ENCODE measurements at regions of chr3 and their contacts with region 1.

Region 1: GRCh38 chr3:39189959-39190269 is 2.5 kb downstream of the XIRP1 start:
- DNase-seq: peak; percentile 75
- H3K4me3 Mint-ChIP-seq: no peak overlapping the region
- H3K27ac Mint-ChIP-seq: no peak overlapping the region
- H3K4me1 Mint-ChIP-seq: peaks cover 27% of the 10 kb centered on the region
- H3K27me3 Mint-ChIP-seq: no peaks in the 10 kb centered on the region

Region 2: GRCh38 chr3:39126532-39127071 is 63.3 kb before region 1 on chr3:
- CTCF ChIA-PET with region 1: interaction called, 52 read pairs
- intact Hi-C with region 1: no loop called
- DNase-seq: peak; percentile 80
- H3K4me3 Mint-ChIP-seq: no peak overlapping the region
- H3K27ac Mint-ChIP-seq: no peak overlapping the region
- H3K4me1 Mint-ChIP-seq: peaks cover 18% of the 10 kb centered on the region
- H3K27me3 Mint-ChIP-seq: no peaks in the 10 kb centered on the region

Region 3: DNA sequence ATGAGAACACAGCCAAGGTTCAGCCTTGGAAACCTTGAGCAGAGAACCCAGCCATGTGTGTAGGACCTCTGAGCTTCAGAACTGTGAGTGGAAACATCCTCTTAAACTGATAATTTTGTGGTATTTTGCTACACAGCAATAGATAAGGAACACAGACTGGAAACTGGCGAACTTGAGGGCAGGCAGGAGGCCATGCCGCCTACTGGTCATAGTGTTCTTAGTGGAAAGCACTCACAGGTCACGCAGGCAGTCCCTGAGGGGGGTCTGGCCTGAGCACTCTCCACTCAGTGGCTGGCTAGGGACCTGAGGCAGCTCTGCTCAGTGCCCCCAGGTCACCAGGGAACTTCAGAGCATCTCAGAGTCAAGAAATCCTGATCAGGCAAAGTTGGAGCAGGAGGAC is 12.2 kb after region 1 on chr3:
- CTCF ChIA-PET with region 1: interaction called, 22 read pairs
- intact Hi-C with region 1: no loop called
- DNase-seq: no peak
- H3K4me3 Mint-ChIP-seq: no peak overlapping the region
- H3K27ac Mint-ChIP-seq: no peak overlapping the region
- H3K4me1 Mint-ChIP-seq: peaks cover 2% of the 10 kb centered on the region
- H3K27me3 Mint-ChIP-seq: no peaks in the 10 kb centered on the region

Region 4: DNA sequence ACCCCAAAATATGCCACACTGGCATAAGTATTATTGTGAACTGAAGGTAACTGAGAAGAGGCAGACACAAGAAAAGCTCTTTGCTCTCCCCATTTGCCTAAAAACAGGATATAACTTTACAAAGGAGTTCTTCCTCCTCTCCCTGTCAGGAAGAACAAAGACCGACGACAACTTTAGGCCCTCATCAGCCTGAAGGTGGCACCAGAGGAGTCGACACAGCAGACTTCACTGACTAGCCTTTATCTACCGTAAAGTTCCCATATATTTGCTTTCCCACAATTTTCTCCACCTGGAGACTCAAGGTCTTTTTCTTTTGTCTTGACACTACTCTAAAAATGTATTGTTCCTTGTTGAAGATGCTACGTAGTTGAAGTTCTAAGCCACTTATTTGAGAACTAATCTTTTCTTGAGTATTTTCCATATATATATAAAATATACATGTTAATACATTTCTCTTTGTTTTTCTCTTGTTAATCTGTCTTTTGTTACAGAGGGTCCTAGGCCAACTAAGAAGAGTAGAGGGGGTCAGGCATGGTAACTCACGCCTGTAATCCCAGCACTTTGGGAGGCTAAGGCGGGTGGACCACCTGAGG is 18.6 kb after region 1 on chr3:
- CTCF ChIA-PET with region 1: interaction called, 22 read pairs
- intact Hi-C with region 1: loop called (anchors 1 kb)
- DNase-seq: peak; percentile 72
- H3K4me3 Mint-ChIP-seq: no peak overlapping the region
- H3K27ac Mint-ChIP-seq: no peak overlapping the region
- H3K4me1 Mint-ChIP-seq: peaks cover 8% of the 10 kb centered on the region
- H3K27me3 Mint-ChIP-seq: no peaks in the 10 kb centered on the region

Region 5: DNA sequence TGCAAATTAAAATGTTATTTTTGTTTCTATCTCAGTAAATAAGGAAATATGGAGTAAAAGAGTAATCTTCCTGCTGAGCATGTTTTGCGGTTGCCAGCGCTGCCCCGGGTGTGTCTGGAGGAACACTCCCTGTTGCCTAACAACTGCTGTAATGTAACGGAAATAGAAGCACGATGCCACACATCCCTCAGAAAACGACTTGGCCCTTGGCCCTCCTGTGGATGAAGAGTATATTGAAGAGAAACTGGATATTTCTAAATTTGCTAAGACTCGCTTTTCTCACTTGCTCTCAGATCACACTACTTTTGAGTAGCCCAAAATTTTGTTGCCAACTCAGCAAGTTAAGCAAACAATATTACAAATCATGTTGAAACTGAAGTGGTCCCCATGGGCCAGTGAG is 71.0 kb after region 1 on chr3:
- CTCF ChIA-PET with region 1: interaction called, 4 read pairs
- intact Hi-C with region 1: loop called (anchors 1 kb)
- DNase-seq: peak; percentile 78
- H3K4me3 Mint-ChIP-seq: no peak overlapping the region
- H3K27ac Mint-ChIP-seq: no peak overlapping the region
- H3K4me1 Mint-ChIP-seq: peaks cover 20% of the 10 kb centered on the region
- H3K27me3 Mint-ChIP-seq: peaks cover 8% of the 10 kb centered on the region

Region 6: GRCh38 chr3:39279745-39280517 is 90.0 kb after region 1 on chr3 and contains the start of gene CX3CR1:
- CTCF ChIA-PET with region 1: interaction called, 10 read pairs
- intact Hi-C with region 1: no loop called
- DNase-seq: no peak
- H3K4me3 Mint-ChIP-seq: no peak within 1 kb of the TSS
- H3K27ac Mint-ChIP-seq: peak within 1 kb of the TSS; percentile 25
- H3K4me1 Mint-ChIP-seq: peaks cover 6% of the 10 kb centered on the region
- H3K27me3 Mint-ChIP-seq: no peaks in the 10 kb centered on the region
- total RNA-seq, gene CX3CR1: not detected

Region 7: DNA sequence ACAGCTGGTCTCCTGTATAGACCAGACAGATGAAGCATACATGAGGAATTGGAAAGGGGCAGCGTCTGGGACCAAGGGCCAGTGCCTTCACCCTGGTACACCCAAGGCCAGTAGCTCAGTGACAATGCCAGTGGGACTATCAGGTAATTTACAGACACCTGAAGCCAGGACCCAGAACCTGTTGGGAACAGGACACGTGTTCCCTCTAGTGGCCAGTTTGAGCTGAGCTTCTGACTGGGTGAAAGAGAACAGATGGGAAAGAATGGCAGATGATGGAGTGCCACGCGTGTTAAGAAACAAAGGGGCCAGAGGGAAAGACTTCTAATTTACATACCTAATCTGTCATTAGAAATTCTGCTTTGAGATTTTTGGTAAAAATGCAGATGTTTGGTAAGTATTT is 188.2 kb after region 1 on chr3:
- CTCF ChIA-PET with region 1: interaction called, 7 read pairs
- intact Hi-C with region 1: loop called (anchors 1 kb)
- DNase-seq: peak; percentile 78
- H3K4me3 Mint-ChIP-seq: no peak overlapping the region
- H3K27ac Mint-ChIP-seq: no peak overlapping the region
- H3K4me1 Mint-ChIP-seq: peaks cover 4% of the 10 kb centered on the region
- H3K27me3 Mint-ChIP-seq: no peaks in the 10 kb centered on the region